HEK293 (cell line): ENCODE measurements at regions of chr11 and their contacts with region 1.

Region 1: GRCh38 chr11:63635762-63636465 is 21.7 kb upstream of the PLAAT3 start:
- H3K4me3 ChIP-seq: no peak overlapping the region
- H3K27ac ChIP-seq: no peak overlapping the region
- H3K4me1 ChIP-seq: no peaks in the 10 kb centered on the region
- CTCF ChIP-seq: 0 out of 2 replicates have a peak, but pooled peaks have one; percentile 56

Region 2: GRCh38 chr11:62816557-62816956 is 819.4 kb before region 1 on chr11:
- CTCF ChIA-PET with region 1: no interaction called
- POLR2A ChIA-PET with region 1: interaction called, 10 read pairs
- H3K4me3 ChIP-seq: no peak overlapping the region
- H3K27ac ChIP-seq: no peak overlapping the region
- H3K4me1 ChIP-seq: no peaks in the 10 kb centered on the region
- CTCF ChIP-seq: no peak

Region 3: GRCh38 chr11:63212742-63213141 is 423.2 kb before region 1 on chr11:
- CTCF ChIA-PET with region 1: no interaction called
- POLR2A ChIA-PET with region 1: no interaction called
- H3K4me3 ChIP-seq: no peak overlapping the region
- H3K27ac ChIP-seq: no peak overlapping the region
- H3K4me1 ChIP-seq: no peaks in the 10 kb centered on the region
- CTCF ChIP-seq: no peak

Region 4: DNA sequence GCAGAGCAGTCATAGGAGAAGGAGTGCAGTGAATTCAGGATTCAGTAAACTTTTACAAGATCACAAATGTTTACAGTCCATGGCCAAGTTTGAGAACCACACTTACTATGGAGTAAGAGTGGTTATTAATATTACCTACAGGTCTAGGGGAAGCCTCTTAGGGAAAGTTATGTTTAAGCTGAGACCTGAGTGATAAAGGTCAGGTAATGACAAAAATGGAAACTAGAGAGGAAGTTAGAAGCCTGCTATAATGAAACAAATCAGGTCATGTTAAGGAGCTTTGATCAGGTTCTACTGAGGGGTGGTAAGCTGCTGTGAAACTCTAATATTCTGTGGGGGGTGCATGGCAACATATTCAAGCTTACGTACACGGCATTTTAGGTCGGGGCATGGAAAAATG is 298.8 kb before region 1 on chr11:
- CTCF ChIA-PET with region 1: no interaction called
- POLR2A ChIA-PET with region 1: no interaction called
- H3K4me3 ChIP-seq: no peak overlapping the region
- H3K27ac ChIP-seq: no peak overlapping the region
- H3K4me1 ChIP-seq: no peaks in the 10 kb centered on the region
- CTCF ChIP-seq: no peak

Region 5: GRCh38 chr11:63427971-63428508 is 207.9 kb before region 1 on chr11:
- CTCF ChIA-PET with region 1: no interaction called
- POLR2A ChIA-PET with region 1: no interaction called
- H3K4me3 ChIP-seq: no peak overlapping the region
- H3K27ac ChIP-seq: no peak overlapping the region
- H3K4me1 ChIP-seq: no peaks in the 10 kb centered on the region
- CTCF ChIP-seq: no peak

Region 6: DNA sequence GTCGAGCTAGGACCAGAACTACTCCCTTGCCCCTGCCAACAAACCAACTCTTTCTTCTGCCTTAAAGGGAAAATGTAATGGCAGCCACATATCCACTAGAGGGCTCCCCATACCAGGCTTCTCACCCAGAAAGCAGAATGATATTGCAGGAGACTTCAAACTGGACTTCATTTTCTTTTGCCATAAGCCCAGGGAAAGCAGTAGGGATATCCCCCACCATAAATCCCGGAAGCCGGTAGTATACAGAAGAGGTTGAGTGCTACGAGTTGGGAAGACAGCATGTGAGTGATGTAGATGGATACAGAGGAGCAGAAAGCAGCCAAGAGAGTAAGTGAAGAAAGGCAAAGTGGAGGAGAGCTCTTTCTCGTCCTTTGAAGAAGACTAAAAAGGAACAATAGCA is 157.0 kb before region 1 on chr11:
- CTCF ChIA-PET with region 1: interaction called, 64 read pairs
- POLR2A ChIA-PET with region 1: no interaction called
- H3K4me3 ChIP-seq: no peak overlapping the region
- H3K27ac ChIP-seq: no peak overlapping the region
- H3K4me1 ChIP-seq: no peaks in the 10 kb centered on the region
- CTCF ChIP-seq: peak; percentile 32; the same call in 1 of the 2 replicates

Region 7: GRCh38 chr11:63592975-63593395 is 42.9 kb before region 1 on chr11:
- CTCF ChIA-PET with region 1: interaction called, 10 read pairs
- POLR2A ChIA-PET with region 1: no interaction called
- H3K4me3 ChIP-seq: no peak overlapping the region
- H3K27ac ChIP-seq: no peak overlapping the region
- H3K4me1 ChIP-seq: no peaks in the 10 kb centered on the region
- CTCF ChIP-seq: 0 out of 2 replicates have a peak, but pooled peaks have one; percentile 11

Region 8: GRCh38 chr11:63738720-63739360 is 102.9 kb after region 1 on chr11:
- CTCF ChIA-PET with region 1: interaction called, 21 read pairs
- POLR2A ChIA-PET with region 1: no interaction called
- H3K4me3 ChIP-seq: no peak overlapping the region
- H3K27ac ChIP-seq: no peak overlapping the region
- H3K4me1 ChIP-seq: no peaks in the 10 kb centered on the region
- CTCF ChIP-seq: no peak